Common myeloid progenitor, CD34-positive (primary cell): ENCODE measurements at regions of chr14 and their contacts with region 1.

Region 1: GRCh38 chr14:67571272-67571850 is 28.7 kb downstream of the PIGH start:
- DNase-seq: peak; percentile 65 to 76 (median 69)
- H3K4me3 ChIP-seq: no peak overlapping the region
- H3K27ac ChIP-seq: no peak overlapping the region
- H3K4me1 ChIP-seq: no peaks in the 10 kb centered on the region
- H3K27me3 ChIP-seq: peaks cover 0 to 5% (median 0%) of the 10 kb centered on the region in 5 experiments

Region 2: DNA sequence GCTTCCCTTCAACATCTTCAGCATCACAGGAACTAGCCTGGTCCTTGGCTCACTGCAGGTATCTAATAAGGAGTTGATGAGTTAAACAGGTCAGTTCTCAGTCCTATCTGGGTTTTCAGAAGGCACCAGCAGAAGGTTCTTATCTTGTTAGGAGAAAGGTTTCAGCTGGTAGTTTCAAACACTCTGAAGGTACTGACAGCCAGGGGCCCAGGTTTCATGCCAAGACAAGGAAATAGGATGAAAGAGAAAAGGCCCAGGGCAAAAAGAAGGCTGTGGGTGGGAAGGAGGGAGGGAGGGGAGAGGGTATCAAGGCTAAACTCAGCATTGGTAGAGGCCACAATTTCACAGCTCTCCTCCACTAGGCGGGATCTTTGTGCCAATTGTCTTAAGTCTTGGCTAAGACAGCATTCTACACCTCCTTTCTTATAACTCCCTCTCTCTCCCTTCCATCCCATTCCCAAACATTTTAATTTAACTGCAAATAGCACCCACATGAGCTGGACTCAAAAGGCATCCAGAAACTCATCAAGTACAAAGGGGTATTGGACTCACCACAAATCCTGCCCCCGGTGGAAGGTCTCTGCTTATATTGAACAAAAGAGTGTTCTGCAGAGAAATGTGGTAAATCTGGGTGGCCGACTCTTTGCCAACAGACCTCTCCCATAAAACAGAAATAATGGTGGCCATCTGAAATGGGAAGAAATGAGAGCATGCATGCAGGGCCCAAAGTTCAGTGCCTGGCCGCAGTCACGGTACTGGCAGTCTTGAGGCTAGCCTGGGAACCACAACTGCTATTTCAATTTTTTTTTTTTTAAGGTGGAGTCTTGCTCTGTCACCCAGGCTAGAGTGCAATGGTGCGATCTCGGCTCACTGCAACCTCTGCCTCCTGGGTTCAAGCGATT is 103.9 kb before region 1 on chr14:
- CTCF ChIA-PET with region 1: interaction called, 10 read pairs
- POLR2A ChIA-PET with region 1: no interaction called
- DNase-seq: peak in 2 of 3 donors; percentile 35 to 36
- H3K4me3 ChIP-seq: no peak overlapping the region
- H3K27ac ChIP-seq: no peak overlapping the region
- H3K4me1 ChIP-seq: no peaks in the 10 kb centered on the region
- H3K27me3 ChIP-seq: no peaks in the 10 kb centered on the region

Region 3: GRCh38 chr14:67526676-67527459 is 44.5 kb before region 1 on chr14:
- CTCF ChIA-PET with region 1: interaction called, 78 read pairs
- POLR2A ChIA-PET with region 1: interaction called, 4 read pairs
- DNase-seq: peak; percentile 62 to 76 (median 75)
- H3K4me3 ChIP-seq: no peak overlapping the region
- H3K27ac ChIP-seq: no peak overlapping the region
- H3K4me1 ChIP-seq: peaks cover 0 to 8% (median 6%) of the 10 kb centered on the region in 4 experiments
- H3K27me3 ChIP-seq: peaks cover 4 to 84% (median 45%) of the 10 kb centered on the region in 5 experiments

Region 4: GRCh38 chr14:67532998-67533753 is 38.2 kb before region 1 on chr14 and contains the start of gene PLEKHH1:
- CTCF ChIA-PET with region 1: interaction called, 78 read pairs
- POLR2A ChIA-PET with region 1: no interaction called
- DNase-seq: peak; percentile 34 to 66 (median 59)
- H3K4me3 ChIP-seq: peak within 1 kb of the TSS; percentile 35 to 74 (median 63)
- H3K27ac ChIP-seq: no peak within 1 kb of the TSS
- H3K4me1 ChIP-seq: peaks cover 0 to 12% (median 12%) of the 10 kb centered on the region in 4 experiments
- H3K27me3 ChIP-seq: peaks cover 10 to 73% (median 44%) of the 10 kb centered on the region in 5 experiments

Region 5: DNA sequence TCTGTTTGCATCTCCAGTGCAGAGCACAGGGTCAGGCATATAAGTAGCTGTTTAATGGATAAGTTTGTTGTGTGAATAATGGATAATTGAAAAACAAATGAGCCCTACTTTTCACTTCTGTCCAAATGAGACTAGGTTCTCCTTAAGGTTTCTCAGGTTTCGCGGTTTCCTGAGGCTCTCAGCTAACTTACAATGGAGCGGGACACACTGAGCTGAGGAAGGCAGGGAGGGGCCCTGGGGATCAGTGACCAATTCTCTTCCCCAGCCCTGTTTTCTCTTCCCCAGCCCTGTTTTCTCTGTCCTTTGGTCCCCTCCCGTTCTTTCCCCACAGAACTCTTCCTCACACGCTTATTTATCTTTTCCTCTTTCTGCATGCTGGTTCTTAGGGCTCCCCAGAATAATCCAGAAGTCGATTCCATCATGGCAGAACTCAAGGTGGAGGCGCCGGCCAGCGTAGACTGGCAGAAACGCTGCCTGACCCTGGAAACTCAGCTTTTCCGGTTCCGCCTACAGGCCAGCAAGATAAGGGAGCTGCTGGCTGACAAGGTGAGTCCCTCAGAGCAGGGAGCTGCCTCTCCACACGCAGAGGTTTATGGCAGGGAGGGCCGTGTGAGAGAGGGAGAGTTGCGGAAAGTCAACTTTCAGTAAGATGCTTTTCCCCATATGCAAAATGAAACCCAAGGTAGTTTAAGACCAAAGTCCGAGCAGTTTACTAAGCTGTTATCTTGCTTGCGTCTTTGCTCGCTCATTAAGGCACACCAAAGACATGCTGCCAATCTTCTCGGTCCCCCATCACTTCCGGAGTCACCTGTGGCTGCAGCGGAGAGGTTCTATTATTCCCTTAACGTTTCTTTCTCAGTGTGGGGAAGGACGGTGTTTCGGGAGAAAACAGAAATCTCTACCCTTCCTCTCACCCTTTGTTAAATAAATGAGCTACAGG is 29.6 kb before region 1 on chr14:
- CTCF ChIA-PET with region 1: interaction called, 22 read pairs
- POLR2A ChIA-PET with region 1: no interaction called
- DNase-seq: peak; percentile 8 to 18 (median 18)
- H3K4me3 ChIP-seq: peak overlapping the region in 3 of 7 experiments; percentile 11 to 69 (median 40)
- H3K27ac ChIP-seq: no peak overlapping the region
- H3K4me1 ChIP-seq: peaks cover 0 to 8% (median 4%) of the 10 kb centered on the region in 4 experiments
- H3K27me3 ChIP-seq: peaks cover 0 to 30% (median 6%) of the 10 kb centered on the region in 5 experiments

Region 6: GRCh38 chr14:67557126-67557525 is 14.2 kb before region 1 on chr14:
- CTCF ChIA-PET with region 1: interaction called, 94 read pairs
- POLR2A ChIA-PET with region 1: no interaction called
- DNase-seq: no peak
- H3K4me3 ChIP-seq: no peak overlapping the region
- H3K27ac ChIP-seq: no peak overlapping the region
- H3K4me1 ChIP-seq: peaks cover 0 to 11% (median 4%) of the 10 kb centered on the region in 4 experiments
- H3K27me3 ChIP-seq: peaks cover 0 to 4% (median 0%) of the 10 kb centered on the region in 5 experiments

Region 7: DNA sequence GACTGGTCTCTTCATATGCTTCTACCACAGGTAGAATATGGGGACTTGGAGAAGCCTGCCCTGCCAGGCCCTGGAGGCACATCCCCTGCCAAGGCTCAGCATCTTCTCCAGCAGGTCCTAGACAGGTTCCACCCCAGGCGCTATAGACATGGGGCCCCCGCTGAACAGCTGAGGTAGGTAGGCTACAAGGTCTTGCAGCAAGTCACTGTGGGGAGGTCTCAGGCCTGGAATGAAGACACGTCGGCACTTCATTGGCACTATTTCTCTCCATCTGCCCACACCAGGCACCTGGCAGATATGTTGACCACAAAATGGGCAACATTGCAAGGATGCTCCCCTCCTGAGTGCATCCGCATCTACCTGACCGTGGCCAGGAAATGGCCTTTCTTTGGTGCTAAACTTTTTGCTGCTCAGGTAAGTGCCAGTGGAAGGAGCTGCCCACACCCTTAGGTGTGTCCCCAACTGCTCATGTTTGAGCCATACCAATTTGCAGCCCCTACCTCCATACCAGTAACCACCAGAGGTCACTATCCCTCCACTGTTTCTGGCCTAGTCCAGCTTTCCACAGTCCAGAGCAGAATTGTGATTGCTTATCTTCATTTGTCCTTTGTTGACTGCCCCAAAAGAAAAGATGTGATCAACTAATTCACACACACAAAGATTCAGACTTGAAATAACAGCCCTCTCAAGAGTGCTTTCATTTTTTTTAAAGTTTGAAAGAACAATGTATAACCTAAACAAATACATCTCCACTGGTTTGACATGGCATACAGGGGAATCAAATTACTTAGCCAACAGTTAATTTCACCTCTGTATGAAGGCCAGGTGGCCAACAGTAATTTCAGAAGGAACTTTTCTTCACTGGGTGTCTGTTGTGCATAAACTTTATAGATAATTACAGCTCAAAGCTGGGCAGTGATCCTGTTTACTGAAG is 12.6 kb after region 1 on chr14:
- CTCF ChIA-PET with region 1: interaction called, 94 read pairs
- POLR2A ChIA-PET with region 1: no interaction called
- DNase-seq: peak; percentile 51 to 72 (median 63)
- H3K4me3 ChIP-seq: no peak overlapping the region
- H3K27ac ChIP-seq: no peak overlapping the region
- H3K4me1 ChIP-seq: no peaks in the 10 kb centered on the region
- H3K27me3 ChIP-seq: peaks cover 0 to 6% (median 0%) of the 10 kb centered on the region in 5 experiments